Naive thymus-derived CD4-positive, alpha-beta T cell (primary cell): ENCODE measurements at regions of chr4 and their contacts with region 1.

Region 1: GRCh38 chr4:99847362-99847976 is 30.8 kb downstream of the DAPP1 start:
- DNase-seq: peak in 6 of 9 donors; percentile 13 to 39 (median 26)
- ATAC-seq: peak; percentile 61
- H3K4me3 ChIP-seq: peak overlapping the region; percentile 9
- H3K4me3 Mint-ChIP-seq: peak overlapping the region in 9 of 10 donors; percentile 49 to 85 (median 75)
- H3K27ac ChIP-seq: peak overlapping the region; percentile 70
- H3K27ac Mint-ChIP-seq: peak overlapping the region; percentile 88 to 99 (median 96)
- H3K4me1 ChIP-seq: peaks cover 8 to 27% of the 10 kb centered on the region in 2 donors
- H3K4me1 Mint-ChIP-seq: peaks cover 31 to 75% (median 65%) of the 10 kb centered on the region in 7 donors
- H3K27me3 ChIP-seq: no peaks in the 10 kb centered on the region
- H3K27me3 Mint-ChIP-seq: no peaks in the 10 kb centered on the region

Region 2: GRCh38 chr4:99821918-99822503 is 25.5 kb before region 1 on chr4:
- CTCF ChIA-PET with region 1: no interaction called
- POLR2A ChIA-PET with region 1: interaction called, 35 read pairs
- intact Hi-C with region 1: loop called in 1 of 2 experiments (anchors 1 kb)
- DNase-seq: no peak
- ATAC-seq: peak; percentile 83
- H3K4me3 ChIP-seq: no peak overlapping the region
- H3K4me3 Mint-ChIP-seq: peak overlapping the region in 8 of 10 donors; percentile 3 to 65 (median 36)
- H3K27ac ChIP-seq: no peak overlapping the region
- H3K27ac Mint-ChIP-seq: peak overlapping the region in 7 of 9 donors; percentile 4 to 75 (median 11)
- H3K4me1 ChIP-seq: peaks cover 7 to 24% of the 10 kb centered on the region in 2 donors
- H3K4me1 Mint-ChIP-seq: peaks cover 49 to 93% (median 79%) of the 10 kb centered on the region in 7 donors
- H3K27me3 ChIP-seq: no peaks in the 10 kb centered on the region
- H3K27me3 Mint-ChIP-seq: no peaks in the 10 kb centered on the region